CD4-positive, alpha-beta T cell (primary cell): ENCODE measurements at regions of chr11 and their contacts with region 1.

Region 1: DNA sequence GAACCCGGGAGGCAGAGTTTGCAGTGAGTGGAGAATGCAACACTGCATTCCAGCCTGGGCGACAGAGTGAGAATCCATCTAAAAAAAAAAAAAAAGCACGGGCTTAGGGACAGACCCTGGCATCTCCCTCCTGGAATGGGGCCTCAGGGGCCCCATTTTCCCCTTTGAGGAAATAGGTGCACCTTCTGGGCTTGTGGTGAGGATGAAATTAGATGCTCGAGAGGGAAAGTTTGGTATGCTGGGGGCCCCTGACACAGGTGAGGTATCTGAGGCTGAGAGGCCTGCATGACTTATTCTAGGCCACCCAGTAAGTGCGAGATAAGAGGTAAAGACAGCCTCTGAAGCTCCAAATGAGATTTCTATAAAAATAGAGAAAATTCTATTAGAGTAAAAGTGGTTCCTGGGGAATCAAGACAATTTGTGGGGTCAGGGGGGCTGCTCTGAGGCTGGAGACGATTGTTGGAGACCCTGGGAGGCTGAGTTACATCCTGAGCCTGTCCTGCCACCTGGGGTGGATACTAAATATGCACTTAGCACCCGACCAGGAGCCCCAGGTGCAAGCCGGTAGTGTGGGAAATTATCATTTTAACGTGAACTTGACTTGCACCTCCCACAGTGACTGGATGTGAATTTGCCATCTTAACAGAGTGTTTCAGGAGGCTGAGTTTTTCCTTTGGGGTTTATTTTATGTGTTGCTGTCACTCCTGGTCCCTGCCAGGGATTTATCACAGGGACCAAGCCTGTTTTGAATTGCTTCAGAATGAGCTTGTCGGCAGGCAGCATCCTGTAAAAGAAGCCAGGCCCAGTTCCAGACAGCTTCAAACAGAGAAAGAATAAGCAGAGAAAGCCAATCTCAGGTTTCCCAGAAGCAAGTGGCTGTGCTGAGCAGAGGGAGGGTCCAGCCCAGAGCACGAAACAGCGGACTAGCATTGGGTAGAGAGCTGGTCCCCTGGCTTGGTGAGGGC is 48.4 kb upstream of the TSKU start:
- DNase-seq: no peak
- ATAC-seq: no peak
- H3K4me3 ChIP-seq: no peak overlapping the region
- H3K4me3 Mint-ChIP-seq: no peak overlapping the region
- H3K27ac ChIP-seq: no peak overlapping the region
- H3K27ac Mint-ChIP-seq: no peak overlapping the region
- H3K4me1 ChIP-seq: peaks cover 3% of the 10 kb centered on the region
- H3K4me1 Mint-ChIP-seq: no peaks in the 10 kb centered on the region
- H3K27me3 ChIP-seq: no peaks in the 10 kb centered on the region
- H3K27me3 Mint-ChIP-seq: peaks cover under 1% of the 10 kb centered on the region
- CTCF ChIP-seq: no peak

Region 2: DNA sequence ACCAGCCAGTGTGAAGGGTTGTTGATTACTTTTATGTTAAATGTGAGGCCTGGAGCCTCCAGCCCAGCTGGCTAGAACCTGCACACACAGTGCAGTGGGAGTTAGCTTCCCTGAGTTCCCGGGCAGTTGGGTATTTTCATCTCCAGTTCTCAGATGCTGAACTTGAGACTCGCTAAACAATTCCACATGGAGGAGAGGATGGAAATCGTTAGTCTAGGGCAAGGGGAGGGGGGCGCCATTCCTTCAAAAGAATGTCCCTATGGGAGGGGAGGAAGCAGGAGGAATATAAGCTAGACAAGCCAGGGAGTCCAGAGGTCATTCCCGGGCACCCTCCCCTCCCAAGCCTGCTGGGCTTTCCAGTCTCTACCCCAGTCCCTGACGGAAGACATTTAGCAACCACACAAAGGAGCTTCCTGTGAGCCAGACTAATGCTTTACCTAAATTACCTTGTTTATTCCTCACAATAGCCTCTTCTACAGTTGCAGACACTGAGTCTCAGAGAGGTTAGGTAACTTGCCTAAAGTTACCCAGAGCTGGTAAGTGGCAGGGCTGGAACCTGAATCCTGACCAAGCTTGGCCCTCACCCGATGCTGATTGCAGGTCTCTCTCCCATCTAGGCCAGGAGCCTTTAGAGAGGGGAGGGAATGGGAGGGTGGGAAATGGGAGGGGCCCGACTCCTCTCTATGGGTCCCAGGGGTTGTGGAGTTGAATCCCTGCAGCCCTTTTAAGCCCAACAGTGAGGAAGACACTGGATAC is 46.5 kb after region 1 on chr11:
- CTCF ChIA-PET with region 1: no interaction called
- POLR2A ChIA-PET with region 1: no interaction called
- intact Hi-C with region 1: no loop called
- DNase-seq: no peak
- ATAC-seq: no peak
- H3K4me3 ChIP-seq: no peak overlapping the region
- H3K4me3 Mint-ChIP-seq: peak overlapping the region; percentile 52
- H3K27ac ChIP-seq: no peak overlapping the region
- H3K27ac Mint-ChIP-seq: no peak overlapping the region
- H3K4me1 ChIP-seq: peaks cover 20% of the 10 kb centered on the region
- H3K4me1 Mint-ChIP-seq: no peaks in the 10 kb centered on the region
- H3K27me3 ChIP-seq: peaks cover 24 to 41% of the 10 kb centered on the region in 2 experiments
- H3K27me3 Mint-ChIP-seq: peaks cover 66% of the 10 kb centered on the region
- CTCF ChIP-seq: no peak

Region 3: GRCh38 chr11:76799066-76799804 is 64.5 kb after region 1 on chr11:
- CTCF ChIA-PET with region 1: interaction called, 4 read pairs
- POLR2A ChIA-PET with region 1: no interaction called
- intact Hi-C with region 1: loop called (anchors 1 kb)
- DNase-seq: peak; percentile 52 to 88 (median 70)
- ATAC-seq: peak; percentile 82
- H3K4me3 ChIP-seq: peak overlapping the region; percentile 41
- H3K4me3 Mint-ChIP-seq: peak overlapping the region; percentile 7
- H3K27ac ChIP-seq: no peak overlapping the region
- H3K27ac Mint-ChIP-seq: no peak overlapping the region
- H3K4me1 ChIP-seq: peaks cover 26% of the 10 kb centered on the region
- H3K4me1 Mint-ChIP-seq: peaks cover 16% of the 10 kb centered on the region
- H3K27me3 ChIP-seq: peaks cover 0 to under 1% of the 10 kb centered on the region in 2 experiments
- H3K27me3 Mint-ChIP-seq: no peaks in the 10 kb centered on the region
- CTCF ChIP-seq: peak; percentile 86

Region 4: DNA sequence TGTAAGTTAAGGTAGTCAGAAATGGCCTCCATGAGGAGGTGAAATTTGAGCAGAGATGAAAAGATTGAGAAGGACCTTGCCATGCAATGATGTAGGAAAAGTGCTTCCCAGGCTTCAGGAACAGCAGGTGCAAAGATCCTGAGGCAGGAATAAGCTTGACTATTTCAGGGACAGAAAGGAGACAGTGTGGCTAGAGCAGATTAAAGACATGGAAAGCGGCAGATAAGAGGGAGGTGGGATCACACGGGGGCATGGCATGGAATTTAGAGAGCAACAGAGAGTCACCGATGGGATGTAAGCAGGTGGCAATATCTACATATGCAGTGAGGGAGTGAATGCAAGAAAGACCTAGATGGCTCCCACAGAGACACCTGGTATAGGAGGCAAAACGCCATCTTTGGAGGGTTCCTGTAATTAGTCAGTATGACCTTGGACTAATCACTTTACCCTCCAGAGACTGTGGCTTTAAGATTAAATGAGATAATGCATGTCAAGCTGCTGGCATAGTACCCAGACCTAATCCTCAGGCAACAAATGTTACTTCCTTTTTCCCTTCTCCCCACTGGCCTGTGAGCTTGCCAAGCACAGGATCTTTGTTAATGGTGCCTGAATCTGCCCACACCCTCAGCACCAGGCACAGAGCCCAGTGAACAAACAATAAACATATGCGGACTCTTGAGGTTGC is 101.3 kb after region 1 on chr11:
- CTCF ChIA-PET with region 1: no interaction called
- POLR2A ChIA-PET with region 1: no interaction called
- intact Hi-C with region 1: no loop called
- DNase-seq: no peak
- ATAC-seq: no peak
- H3K4me3 ChIP-seq: no peak overlapping the region
- H3K4me3 Mint-ChIP-seq: no peak overlapping the region
- H3K27ac ChIP-seq: no peak overlapping the region
- H3K27ac Mint-ChIP-seq: no peak overlapping the region
- H3K4me1 ChIP-seq: no peaks in the 10 kb centered on the region
- H3K4me1 Mint-ChIP-seq: no peaks in the 10 kb centered on the region
- H3K27me3 ChIP-seq: peaks cover 4 to 6% of the 10 kb centered on the region in 2 experiments
- H3K27me3 Mint-ChIP-seq: peaks cover 22% of the 10 kb centered on the region
- CTCF ChIP-seq: no peak

Region 5: DNA sequence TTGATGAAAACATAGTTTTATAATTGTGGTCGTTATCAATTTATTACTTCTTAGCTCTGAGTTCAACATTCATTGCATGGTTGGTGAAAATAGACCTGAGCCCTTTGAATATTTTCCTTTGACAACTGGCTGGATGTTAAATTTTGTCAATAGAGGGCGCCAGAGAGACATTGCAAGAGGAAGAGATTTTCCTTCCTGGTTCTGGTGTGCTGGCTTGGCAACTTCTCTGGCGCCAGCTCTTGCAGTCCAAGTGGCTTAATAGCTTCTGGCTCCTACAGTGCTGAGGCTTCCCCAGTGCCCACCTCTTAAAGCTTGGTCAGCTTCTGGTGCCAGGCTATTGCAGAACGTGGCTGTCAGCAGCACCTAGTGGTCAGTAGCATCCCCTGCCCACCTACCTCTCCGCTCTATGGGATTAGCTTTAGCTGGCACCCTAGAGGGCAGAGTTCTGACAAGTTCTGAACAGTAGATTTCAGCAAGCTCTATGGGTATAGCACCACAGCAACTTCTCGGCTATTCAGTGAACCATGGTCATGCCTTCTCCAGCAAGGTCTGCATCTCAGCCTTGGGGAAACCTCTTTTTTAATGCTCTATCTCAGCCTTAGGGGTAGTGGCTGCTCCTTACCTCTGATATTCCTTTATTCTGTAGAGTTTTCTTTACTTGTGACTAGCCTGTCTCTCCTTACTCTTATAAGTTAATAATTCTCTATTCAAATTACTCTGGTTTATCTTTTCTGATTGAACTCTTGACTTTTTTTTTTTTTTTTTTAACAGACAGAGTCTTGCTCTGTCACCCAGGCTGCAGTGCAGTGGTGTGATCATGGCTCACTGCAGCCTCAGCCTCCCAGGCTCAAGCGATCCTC is 185.4 kb after region 1 on chr11:
- CTCF ChIA-PET with region 1: no interaction called
- POLR2A ChIA-PET with region 1: no interaction called
- intact Hi-C with region 1: loop called (anchors 1 to 2 kb)
- DNase-seq: peak; percentile 7 to 85 (median 46)
- ATAC-seq: peak; percentile 80
- H3K4me3 ChIP-seq: peak overlapping the region; percentile 36
- H3K4me3 Mint-ChIP-seq: peak overlapping the region; percentile 72
- H3K27ac ChIP-seq: no peak overlapping the region
- H3K27ac Mint-ChIP-seq: no peak overlapping the region
- H3K4me1 ChIP-seq: peaks cover 5% of the 10 kb centered on the region
- H3K4me1 Mint-ChIP-seq: peaks cover 13% of the 10 kb centered on the region
- H3K27me3 ChIP-seq: no peaks in the 10 kb centered on the region
- H3K27me3 Mint-ChIP-seq: no peaks in the 10 kb centered on the region
- CTCF ChIP-seq: peak; percentile 78

Region 6: DNA sequence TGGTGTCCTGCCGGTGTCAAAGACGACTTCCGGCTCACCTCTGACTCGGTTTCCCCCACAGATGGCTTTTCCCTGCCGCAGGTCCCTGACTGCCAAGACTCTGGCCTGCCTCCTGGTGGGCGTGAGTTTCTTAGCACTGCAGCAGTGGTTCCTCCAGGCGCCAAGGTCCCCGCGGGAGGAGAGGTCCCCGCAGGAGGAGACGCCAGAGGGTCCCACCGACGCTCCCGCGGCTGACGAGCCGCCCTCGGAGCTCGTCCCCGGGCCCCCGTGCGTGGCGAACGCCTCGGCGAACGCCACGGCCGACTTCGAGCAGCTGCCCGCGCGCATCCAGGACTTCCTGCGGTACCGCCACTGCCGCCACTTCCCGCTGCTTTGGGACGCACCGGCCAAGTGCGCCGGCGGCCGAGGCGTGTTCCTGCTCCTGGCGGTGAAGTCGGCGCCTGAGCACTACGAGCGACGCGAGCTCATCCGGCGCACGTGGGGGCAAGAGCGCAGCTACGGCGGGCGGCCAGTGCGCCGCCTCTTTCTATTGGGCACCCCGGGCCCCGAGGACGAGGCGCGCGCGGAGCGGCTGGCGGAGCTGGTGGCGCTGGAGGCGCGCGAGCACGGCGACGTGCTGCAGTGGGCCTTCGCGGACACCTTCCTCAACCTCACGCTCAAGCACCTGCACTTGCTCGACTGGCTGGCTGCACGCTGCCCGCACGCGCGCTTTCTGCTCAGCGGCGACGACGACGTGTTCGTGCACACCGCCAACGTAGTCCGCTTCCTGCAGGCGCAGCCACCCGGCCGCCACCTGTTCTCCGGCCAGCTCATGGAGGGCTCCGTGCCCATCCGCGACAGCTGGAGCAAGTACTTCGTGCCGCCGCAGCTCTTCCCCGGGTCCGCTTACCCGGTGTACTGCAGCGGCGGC is 305.0 kb after region 1 on chr11:
- CTCF ChIA-PET with region 1: no interaction called
- POLR2A ChIA-PET with region 1: no interaction called
- intact Hi-C with region 1: loop called in 1 of 2 experiments (anchors 5 kb)
- DNase-seq: peak in 4 of 14 experiments; percentile 11 to 46 (median 28)
- ATAC-seq: peak; percentile 52
- H3K4me3 ChIP-seq: no peak overlapping the region
- H3K4me3 Mint-ChIP-seq: no peak overlapping the region
- H3K27ac ChIP-seq: no peak overlapping the region
- H3K27ac Mint-ChIP-seq: no peak overlapping the region
- H3K4me1 ChIP-seq: peaks cover 9% of the 10 kb centered on the region
- H3K4me1 Mint-ChIP-seq: peaks cover 6% of the 10 kb centered on the region
- H3K27me3 ChIP-seq: peaks cover 27 to 29% of the 10 kb centered on the region in 2 experiments
- H3K27me3 Mint-ChIP-seq: peaks cover 62% of the 10 kb centered on the region
- CTCF ChIP-seq: peak; percentile 13

Region 7: DNA sequence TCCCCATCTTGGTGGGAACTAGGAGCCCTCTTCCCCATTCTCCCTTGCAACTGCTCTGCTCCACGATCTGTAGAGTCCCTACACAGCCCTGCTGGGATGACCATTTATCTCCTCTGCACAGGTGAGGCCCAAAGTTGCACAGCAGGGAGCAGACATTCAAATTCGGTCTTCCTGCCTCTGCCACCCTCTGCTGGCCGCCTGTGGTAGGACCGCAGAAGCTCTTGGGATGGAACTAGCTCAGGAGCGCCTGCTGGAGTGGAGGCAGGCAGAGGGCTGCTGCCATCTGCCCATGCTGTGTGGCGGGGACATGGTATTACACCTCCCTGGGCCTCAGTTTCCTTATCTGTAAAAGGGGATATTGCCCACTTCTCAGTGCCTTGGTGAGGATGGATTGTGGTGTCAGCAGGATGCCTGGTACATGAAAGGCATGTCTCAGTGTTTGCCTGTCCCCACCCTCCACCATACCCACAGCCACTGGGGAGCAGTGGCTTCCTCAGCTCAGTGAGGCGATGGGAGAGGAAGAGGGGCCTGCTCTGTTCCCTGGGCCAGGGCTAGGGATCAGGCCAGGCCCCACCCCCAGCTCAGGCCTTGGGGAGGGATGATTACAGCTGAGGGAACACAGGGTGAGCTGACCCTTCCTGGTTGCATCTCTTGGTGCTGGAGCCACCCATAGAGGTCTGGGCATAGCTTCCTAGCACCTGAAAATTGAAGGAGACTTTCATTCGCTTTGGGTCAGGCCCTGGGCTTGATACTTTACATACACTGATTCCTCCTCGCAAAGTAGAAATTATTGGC is 356.6 kb after region 1 on chr11:
- CTCF ChIA-PET with region 1: no interaction called
- POLR2A ChIA-PET with region 1: no interaction called
- intact Hi-C with region 1: loop called in 1 of 2 experiments (anchors 5 kb)
- DNase-seq: peak; percentile 65 to 86 (median 74)
- ATAC-seq: peak; percentile 99
- H3K4me3 ChIP-seq: no peak overlapping the region
- H3K4me3 Mint-ChIP-seq: no peak overlapping the region
- H3K27ac ChIP-seq: no peak overlapping the region
- H3K27ac Mint-ChIP-seq: no peak overlapping the region
- H3K4me1 ChIP-seq: peaks cover 7% of the 10 kb centered on the region
- H3K4me1 Mint-ChIP-seq: peaks cover 5% of the 10 kb centered on the region
- H3K27me3 ChIP-seq: no peaks in the 10 kb centered on the region
- H3K27me3 Mint-ChIP-seq: no peaks in the 10 kb centered on the region
- CTCF ChIP-seq: peak; percentile 89

Region 8: GRCh38 chr11:77619576-77620198 is 884.9 kb after region 1 on chr11:
- CTCF ChIA-PET with region 1: no interaction called
- POLR2A ChIA-PET with region 1: no interaction called
- intact Hi-C with region 1: loop called in 1 of 2 experiments (anchors 10 kb)
- DNase-seq: peak in 4 of 14 experiments; percentile 16 to 67 (median 60)
- ATAC-seq: peak; percentile 41
- H3K4me3 ChIP-seq: no peak overlapping the region
- H3K4me3 Mint-ChIP-seq: no peak overlapping the region
- H3K27ac ChIP-seq: no peak overlapping the region
- H3K27ac Mint-ChIP-seq: no peak overlapping the region
- H3K4me1 ChIP-seq: no peaks in the 10 kb centered on the region
- H3K4me1 Mint-ChIP-seq: no peaks in the 10 kb centered on the region
- H3K27me3 ChIP-seq: no peaks in the 10 kb centered on the region
- H3K27me3 Mint-ChIP-seq: no peaks in the 10 kb centered on the region
- CTCF ChIP-seq: peak; percentile 82